ENCODE measurements at regions of chr2 and their contacts with region 1.

Region 1: GRCh38 chr2:68925295-68925896 is 27.3 kb downstream of the GKN2 start:
- DNase-seq: no peak
- ATAC-seq: peak; percentile 71

Region 2: DNA sequence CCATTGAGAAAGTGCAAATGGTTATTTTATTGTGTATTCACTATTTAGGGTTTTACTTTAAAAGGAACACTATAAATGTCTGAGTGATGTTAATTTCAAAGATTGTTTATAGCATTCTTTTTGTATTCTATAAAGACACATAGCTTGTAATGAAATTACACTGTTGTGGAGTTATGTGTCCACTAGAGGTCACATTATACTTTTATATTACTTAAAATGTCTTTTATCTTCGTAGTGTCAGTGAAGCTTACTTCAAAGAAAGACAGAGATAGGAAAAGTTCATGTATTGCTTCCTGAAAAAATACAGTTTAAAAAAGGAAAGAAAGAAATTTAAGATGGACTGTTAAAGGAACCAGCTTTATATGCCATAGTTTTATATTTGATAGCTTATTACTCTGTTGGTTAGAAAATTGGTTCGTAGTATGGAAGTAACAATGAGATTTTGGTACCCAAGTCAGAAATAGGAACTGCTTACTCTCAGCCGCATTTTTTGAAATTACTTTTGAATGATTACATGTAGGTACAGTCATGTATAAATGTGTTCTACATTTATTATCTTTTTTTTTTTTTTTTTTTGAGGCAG is 437.5 kb before region 1 on chr2:
- intact Hi-C with region 1: loop called in 1 of 2 experiments (anchors 10 kb)
- DNase-seq: no peak
- ATAC-seq: peak; percentile 60

Region 3: DNA sequence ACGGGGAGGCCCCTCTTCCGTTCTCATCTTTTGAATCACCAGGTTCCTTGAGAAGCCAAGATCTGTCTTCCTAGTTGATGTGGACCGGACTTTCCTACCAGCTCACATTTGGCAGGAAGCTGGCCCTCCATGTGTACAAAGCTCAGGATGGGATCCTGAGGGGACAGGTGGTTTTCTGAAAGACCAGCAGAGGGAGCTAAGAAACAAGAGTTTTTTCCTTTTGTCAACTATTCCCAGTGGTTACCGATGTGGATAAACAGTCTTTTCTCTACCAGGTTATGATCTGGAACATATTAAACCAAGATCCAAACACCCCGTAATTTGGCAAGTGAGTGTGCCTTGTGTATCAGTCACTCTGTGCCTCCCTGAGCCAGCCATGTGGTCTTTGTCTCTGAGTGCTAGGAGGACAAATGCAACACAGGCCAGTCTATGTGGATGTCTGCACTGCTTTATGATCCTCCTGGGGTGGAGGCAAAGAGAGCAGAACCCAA is 215.9 kb before region 1 on chr2:
- intact Hi-C with region 1: loop called in 1 of 2 experiments (anchors 10 kb)
- DNase-seq: no peak
- ATAC-seq: peak; percentile 80